ENCODE measurements at regions of chr20 and their contacts with region 1.

Region 1: GRCh38 chr20:45971675-45972499 is at the start of gene ZNF335:
- DNase-seq: peak; percentile 95
- H3K4me3 Mint-ChIP-seq: peak within 1 kb of the TSS; percentile 85
- H3K27ac Mint-ChIP-seq: peak within 1 kb of the TSS; percentile 99
- H3K4me1 Mint-ChIP-seq: peaks cover 21% of the 10 kb centered on the region
- H3K27me3 Mint-ChIP-seq: peaks cover 3% of the 10 kb centered on the region
- total RNA-seq, gene ZNF335: 24.1 to 26.0 TPM

Region 2: DNA sequence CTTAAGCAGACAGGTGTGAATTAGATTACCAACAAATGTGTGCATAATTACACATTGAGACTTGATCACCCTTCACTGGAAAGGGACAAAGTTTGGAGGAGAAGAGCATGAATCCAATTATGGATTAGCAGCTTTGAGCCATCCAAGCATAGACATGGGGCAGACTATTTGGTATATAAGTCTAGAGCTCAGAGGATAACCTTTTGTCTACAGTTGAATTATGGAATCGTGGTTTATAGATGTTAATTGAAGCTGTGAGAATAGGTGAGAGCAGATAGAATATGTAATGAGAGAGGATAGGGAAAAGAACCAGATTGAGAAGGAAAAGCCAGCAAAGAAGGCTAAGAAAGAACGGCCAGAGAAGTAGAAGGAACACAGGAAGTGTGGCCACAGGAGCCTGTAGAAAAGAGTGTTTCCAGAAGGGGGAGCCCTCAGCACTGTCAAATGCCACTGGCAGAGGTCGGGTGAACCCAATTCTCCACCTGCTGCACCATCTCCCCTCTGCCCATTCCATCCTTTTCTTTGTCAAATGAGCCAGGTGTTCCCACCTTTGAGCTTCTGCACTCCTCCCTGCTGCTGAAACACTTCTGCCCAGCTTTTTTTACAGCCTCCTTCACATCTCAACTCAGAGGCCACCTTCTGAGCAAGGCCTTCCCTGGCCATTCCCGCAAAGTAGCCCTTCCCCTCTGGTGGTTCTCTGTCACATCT is 172.8 kb before region 1 on chr20:
- CTCF ChIA-PET with region 1: interaction called, 24 read pairs
- POLR2A ChIA-PET with region 1: interaction called, 3 read pairs
- intact Hi-C with region 1: no loop called
- DNase-seq: peak; percentile 74
- H3K4me3 Mint-ChIP-seq: no peak overlapping the region
- H3K27ac Mint-ChIP-seq: peak overlapping the region; percentile 4
- H3K4me1 Mint-ChIP-seq: peaks cover 16% of the 10 kb centered on the region
- H3K27me3 Mint-ChIP-seq: no peaks in the 10 kb centered on the region

Region 3: DNA sequence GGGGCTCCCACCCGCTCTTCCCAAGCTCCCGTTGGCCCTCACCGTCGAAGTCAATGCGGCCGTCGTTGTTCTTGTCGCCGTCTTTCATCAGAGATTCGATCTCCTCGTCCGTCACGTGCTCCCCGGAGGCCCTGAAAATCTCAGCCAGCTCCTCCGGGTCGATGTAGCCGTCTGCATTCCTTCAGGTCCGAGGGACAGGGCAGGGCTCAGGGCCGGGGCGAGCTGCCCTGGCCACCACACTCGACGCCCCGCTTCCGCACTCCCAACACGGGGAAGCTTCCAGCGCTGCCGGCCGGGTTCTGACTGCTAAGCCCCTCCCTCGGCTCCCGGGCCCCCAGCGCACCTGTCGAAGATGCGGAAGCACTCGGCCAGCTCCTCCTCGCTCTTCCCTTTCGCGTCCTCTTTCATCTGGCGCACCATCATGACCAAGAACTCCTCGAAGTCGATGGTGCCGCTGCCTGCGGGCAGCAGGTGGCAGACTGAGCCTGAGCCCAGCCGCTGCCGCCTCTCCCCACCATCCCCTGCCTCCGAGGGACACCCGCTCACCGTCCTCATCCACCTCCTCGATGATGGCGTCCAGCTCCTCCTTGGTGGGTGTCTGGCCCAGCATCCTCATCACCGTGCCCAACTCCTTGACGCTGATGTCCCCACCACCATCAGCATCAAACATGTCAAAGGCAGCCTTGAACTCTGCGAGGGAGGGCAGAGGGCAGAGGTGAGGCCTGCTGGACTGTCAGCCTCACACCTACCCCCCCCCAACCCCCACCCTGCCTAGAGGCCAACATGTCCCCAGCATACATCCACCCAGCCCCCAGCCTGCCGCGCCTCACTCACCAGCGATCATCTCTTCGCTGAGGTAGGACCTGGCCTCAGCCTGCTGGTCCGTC is 147.7 kb before region 1 on chr20:
- CTCF ChIA-PET with region 1: interaction called, 14 read pairs
- POLR2A ChIA-PET with region 1: no interaction called
- intact Hi-C with region 1: no loop called
- DNase-seq: peak; percentile 72
- H3K4me3 Mint-ChIP-seq: peak overlapping the region; percentile 48
- H3K27ac Mint-ChIP-seq: no peak overlapping the region
- H3K4me1 Mint-ChIP-seq: peaks cover 14% of the 10 kb centered on the region
- H3K27me3 Mint-ChIP-seq: peaks cover 23% of the 10 kb centered on the region

Region 4: GRCh38 chr20:45880988-45881788 is 90.7 kb before region 1 on chr20 and contains the start of gene ZSWIM1:
- CTCF ChIA-PET with region 1: interaction called, 4 read pairs
- POLR2A ChIA-PET with region 1: interaction called, 4 read pairs
- intact Hi-C with region 1: loop called (anchors 2 kb)
- DNase-seq: peak; percentile 99
- H3K4me3 Mint-ChIP-seq: peak within 1 kb of the TSS; percentile 92
- H3K27ac Mint-ChIP-seq: peak within 1 kb of the TSS; percentile 91
- H3K4me1 Mint-ChIP-seq: peaks cover 41% of the 10 kb centered on the region
- H3K27me3 Mint-ChIP-seq: no peaks in the 10 kb centered on the region
- total RNA-seq, gene ZSWIM1: 7.7 to 8.1 TPM

Region 5: DNA sequence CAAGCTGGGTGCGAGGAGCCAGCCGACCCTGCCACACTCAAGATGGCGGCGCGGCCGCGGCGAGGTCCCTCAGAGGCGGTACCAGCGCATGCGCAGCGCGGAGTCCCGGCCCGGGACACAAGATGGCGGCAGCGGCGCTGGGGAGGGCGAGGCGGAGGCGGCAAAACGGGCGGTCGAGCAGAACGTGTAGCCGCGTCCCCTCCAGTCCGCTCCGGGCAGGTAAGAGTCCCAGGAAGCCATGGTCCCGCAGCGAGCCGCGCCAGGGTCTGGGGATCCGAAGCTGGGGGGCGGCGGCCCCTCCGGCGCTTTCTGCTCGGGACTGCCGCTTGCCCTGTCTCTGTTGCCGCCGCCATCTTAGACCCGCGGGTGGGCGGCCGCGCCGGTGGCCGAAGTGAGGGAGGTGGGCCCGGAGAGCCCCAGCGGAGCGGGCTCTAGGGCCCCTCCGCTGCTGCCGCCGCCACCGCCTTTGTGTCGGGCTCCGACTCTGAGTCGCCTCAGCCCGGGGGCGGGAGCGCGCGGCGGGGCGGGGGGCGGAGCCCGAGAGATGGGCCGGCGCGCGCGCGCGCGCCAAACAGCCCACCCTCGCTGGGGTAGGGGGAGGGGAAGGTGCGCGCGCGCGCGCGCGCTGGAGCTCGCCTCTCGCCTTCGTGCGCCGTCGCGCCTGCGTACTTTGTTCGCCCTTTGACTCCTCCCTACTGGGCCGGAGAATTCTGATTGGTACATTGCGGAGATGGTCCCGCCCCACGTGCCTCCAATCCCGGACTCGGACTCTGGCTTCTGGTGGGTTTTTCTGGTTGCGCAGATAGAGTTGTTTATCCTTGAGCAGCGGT is 37.1 kb before region 1 on chr20 and contains the start of gene PCIF1:
- CTCF ChIA-PET with region 1: interaction called, 67 read pairs
- POLR2A ChIA-PET with region 1: interaction called, 28 read pairs
- intact Hi-C with region 1: loop called (anchors 1 kb)
- DNase-seq: peak; percentile 99
- H3K4me3 Mint-ChIP-seq: peak within 1 kb of the TSS; percentile 99
- H3K27ac Mint-ChIP-seq: peak within 1 kb of the TSS; percentile 99
- H3K4me1 Mint-ChIP-seq: peaks cover 32% of the 10 kb centered on the region
- H3K27me3 Mint-ChIP-seq: no peaks in the 10 kb centered on the region
- total RNA-seq, gene PCIF1: 29.9 to 33.0 TPM

Region 6: GRCh38 chr20:45957081-45957941 is 14.6 kb before region 1 on chr20:
- CTCF ChIA-PET with region 1: interaction called, 53 read pairs
- POLR2A ChIA-PET with region 1: interaction called, 4 read pairs
- intact Hi-C with region 1: no loop called
- DNase-seq: no peak
- H3K4me3 Mint-ChIP-seq: no peak overlapping the region
- H3K27ac Mint-ChIP-seq: no peak overlapping the region
- H3K4me1 Mint-ChIP-seq: no peaks in the 10 kb centered on the region
- H3K27me3 Mint-ChIP-seq: no peaks in the 10 kb centered on the region

Region 7: GRCh38 chr20:46013826-46014516 is 42.1 kb after region 1 on chr20:
- CTCF ChIA-PET with region 1: interaction called, 48 read pairs
- POLR2A ChIA-PET with region 1: interaction called, 3 read pairs
- intact Hi-C with region 1: loop called (anchors 5 kb)
- DNase-seq: peak; percentile 76
- H3K4me3 Mint-ChIP-seq: peak overlapping the region; percentile 56
- H3K27ac Mint-ChIP-seq: no peak overlapping the region
- H3K4me1 Mint-ChIP-seq: peaks cover 40% of the 10 kb centered on the region
- H3K27me3 Mint-ChIP-seq: peaks cover 44% of the 10 kb centered on the region

Measured in activated CD4-positive, alpha-beta memory T cell treated with anti-CD3 and anti-CD28 coated beads for 36 hours (primary cell).